Activated B cell treated with CpG ODN at 0.5 μM for 24 hours (primary cell): ENCODE measurements at regions of chr10 and their contacts with region 1.

Region 1: DNA sequence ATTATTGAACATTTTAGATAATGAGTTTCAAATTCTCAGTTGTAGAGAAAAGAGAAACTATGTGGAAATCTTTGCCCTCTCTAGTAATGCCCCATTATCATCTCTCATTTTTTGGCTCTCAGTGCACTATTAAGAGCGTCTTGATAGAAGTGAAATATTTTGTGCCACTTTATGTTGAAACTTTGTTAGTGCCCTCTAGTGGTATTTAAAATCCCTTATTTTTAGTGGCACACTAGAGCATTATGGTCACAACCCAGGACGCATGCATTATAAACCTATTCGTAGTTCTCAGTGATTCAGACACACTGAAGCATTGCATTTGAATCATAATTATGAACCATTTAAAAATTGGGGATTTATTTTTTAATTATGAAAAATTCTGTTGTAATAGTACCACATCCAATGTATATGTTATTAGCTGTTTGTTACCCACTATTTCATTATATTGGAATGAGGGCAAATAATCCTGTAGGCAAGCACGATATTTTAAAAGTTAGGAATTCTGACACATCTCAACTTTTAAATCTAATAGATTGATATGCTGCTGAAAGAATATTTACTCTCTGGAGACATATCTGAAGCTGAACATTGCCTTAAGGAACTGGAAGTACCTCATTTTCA is 21.9 kb downstream of the PDCD4 start:
- DNase-seq: no peak
- ATAC-seq: peak; percentile 93
- H3K4me3 Mint-ChIP-seq: no peak overlapping the region
- H3K27ac Mint-ChIP-seq: no peak overlapping the region
- H3K4me1 Mint-ChIP-seq: peaks cover 22% of the 10 kb centered on the region
- H3K27me3 Mint-ChIP-seq: no peaks in the 10 kb centered on the region
- CTCF ChIP-seq: no peak

Region 2: DNA sequence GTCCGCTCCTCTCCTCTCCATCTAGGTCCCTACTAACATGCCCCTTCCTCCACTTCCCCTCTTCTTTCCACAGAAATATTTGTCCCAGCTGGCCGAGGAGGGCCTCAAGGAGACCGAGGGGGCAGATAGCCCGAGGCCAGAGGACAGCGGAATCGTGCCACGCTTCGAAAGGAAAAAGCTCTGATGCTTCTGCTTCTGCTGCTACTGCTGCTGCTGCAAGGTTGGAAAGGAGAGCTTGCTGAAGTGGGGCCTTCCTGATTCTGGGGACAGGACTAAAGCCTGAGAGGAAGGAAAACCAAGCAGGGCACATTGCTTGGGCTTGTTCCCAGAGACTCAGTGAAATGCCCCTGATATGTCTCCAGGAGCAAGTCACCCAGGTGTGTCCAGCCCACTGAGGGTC is 57.9 kb before region 1 on chr10:
- CTCF ChIA-PET with region 1: no interaction called
- POLR2A ChIA-PET with region 1: no interaction called
- intact Hi-C with region 1: no loop called
- DNase-seq: no peak
- ATAC-seq: no peak
- H3K4me3 Mint-ChIP-seq: no peak overlapping the region
- H3K27ac Mint-ChIP-seq: no peak overlapping the region
- H3K4me1 Mint-ChIP-seq: peaks cover 28% of the 10 kb centered on the region
- H3K27me3 Mint-ChIP-seq: no peaks in the 10 kb centered on the region
- CTCF ChIP-seq: no peak

Region 3: GRCh38 chr10:110864662-110865140 is 29.0 kb before region 1 on chr10:
- CTCF ChIA-PET with region 1: interaction called, 4 read pairs
- POLR2A ChIA-PET with region 1: no interaction called
- intact Hi-C with region 1: loop called (anchors 1 kb)
- DNase-seq: no peak
- ATAC-seq: peak; percentile 50
- H3K4me3 Mint-ChIP-seq: peak overlapping the region; percentile 79
- H3K27ac Mint-ChIP-seq: peak overlapping the region; percentile 97
- H3K4me1 Mint-ChIP-seq: peaks cover 98% of the 10 kb centered on the region
- H3K27me3 Mint-ChIP-seq: no peaks in the 10 kb centered on the region
- CTCF ChIP-seq: no peak

Region 4: DNA sequence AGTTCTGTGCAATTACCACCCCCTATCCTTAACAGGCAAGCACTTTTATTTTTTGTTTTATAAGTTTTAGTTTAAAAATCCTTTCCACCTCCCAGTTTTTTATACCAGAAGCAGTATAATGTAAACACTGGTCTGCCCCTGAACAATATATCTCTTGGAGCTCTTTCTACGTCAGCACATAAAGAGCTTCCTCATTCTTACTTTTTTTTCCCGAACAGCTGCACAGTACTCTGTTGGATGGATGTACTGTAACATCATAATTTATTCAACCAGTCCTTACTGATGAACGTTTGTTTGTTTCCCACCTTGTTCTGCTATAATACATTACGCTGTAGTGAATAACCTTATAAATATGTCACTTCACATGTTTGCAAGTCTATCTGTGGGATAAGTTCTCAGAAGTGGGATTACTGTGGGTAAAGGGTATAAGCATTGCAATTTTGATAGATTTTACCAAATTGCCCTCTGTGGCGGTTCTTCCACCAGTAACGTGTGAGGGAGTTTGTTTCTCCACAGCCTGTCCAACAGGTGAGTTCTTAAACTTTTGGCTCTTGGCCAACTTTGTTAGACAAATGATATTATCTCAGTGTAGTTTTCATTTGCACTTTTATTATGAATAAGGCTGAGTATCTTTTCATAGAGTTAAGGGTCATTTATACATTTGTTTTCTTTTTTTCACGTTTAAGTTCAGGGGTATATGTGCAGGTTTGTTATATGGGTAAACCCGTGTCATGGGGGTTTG is 216.0 kb after region 1 on chr10:
- CTCF ChIA-PET with region 1: no interaction called
- POLR2A ChIA-PET with region 1: no interaction called
- intact Hi-C with region 1: no loop called
- DNase-seq: no peak
- ATAC-seq: no peak
- H3K4me3 Mint-ChIP-seq: no peak overlapping the region
- H3K27ac Mint-ChIP-seq: no peak overlapping the region
- H3K4me1 Mint-ChIP-seq: no peaks in the 10 kb centered on the region
- H3K27me3 Mint-ChIP-seq: peaks cover 18% of the 10 kb centered on the region
- CTCF ChIP-seq: no peak

Region 5: GRCh38 chr10:111598436-111599059 is 704.9 kb after region 1 on chr10:
- CTCF ChIA-PET with region 1: no interaction called
- POLR2A ChIA-PET with region 1: no interaction called
- intact Hi-C with region 1: loop called (anchors 5 kb)
- DNase-seq: no peak
- ATAC-seq: no peak
- H3K4me3 Mint-ChIP-seq: no peak overlapping the region
- H3K27ac Mint-ChIP-seq: no peak overlapping the region
- H3K4me1 Mint-ChIP-seq: no peaks in the 10 kb centered on the region
- H3K27me3 Mint-ChIP-seq: peaks cover 5% of the 10 kb centered on the region
- CTCF ChIP-seq: no peak